ENCODE measurements at regions of chr2 and their contacts with region 1.

Region 1: DNA sequence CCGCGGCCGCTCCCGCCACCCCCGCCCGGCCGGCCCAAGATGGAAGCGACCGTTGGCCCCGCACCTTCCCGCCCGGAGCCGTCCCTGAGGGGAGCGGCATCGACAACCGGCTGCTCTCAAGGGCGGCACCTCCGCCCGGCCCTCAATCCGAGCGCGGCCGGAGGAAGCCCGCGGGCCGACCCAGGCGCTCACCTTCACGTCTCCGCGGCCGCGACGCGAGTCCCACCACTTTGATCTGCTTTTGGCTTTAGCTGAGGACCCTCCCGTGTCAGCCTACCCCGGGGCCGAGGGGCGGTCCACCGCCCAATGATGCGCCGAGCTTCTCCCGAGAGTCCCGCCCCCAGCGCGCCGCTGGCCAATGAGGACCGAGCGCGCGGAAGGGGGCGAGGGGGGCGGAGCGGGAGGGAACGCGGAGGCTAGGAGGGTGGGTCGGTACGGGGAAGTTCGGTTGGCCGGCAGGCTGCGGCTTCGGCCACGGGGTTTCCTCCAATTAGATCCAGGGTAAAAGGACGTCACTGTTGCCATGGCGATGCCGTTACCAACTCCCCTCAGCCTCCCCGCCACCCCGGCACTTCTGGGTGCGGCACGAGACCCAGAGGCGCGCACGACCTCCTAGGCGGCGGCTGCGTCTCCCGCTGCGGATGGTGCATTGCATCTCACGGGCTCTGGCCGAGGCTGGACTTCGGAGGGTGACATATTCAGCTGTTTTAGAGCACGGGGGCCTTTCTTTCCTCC is at the start of gene YWHAQ:
- DNase-seq: peak; percentile 93 to 99 (median 96)
- ATAC-seq: peak; percentile 85
- H3K4me3 ChIP-seq: peak within 1 kb of the TSS; percentile 93
- H3K4me3 Mint-ChIP-seq: peak within 1 kb of the TSS; percentile 98
- H3K27ac ChIP-seq: peak within 1 kb of the TSS; percentile 77 to 81
- H3K27ac Mint-ChIP-seq: peak within 1 kb of the TSS; percentile 96
- H3K4me1 ChIP-seq: peaks cover 42% of the 10 kb centered on the region
- H3K4me1 Mint-ChIP-seq: peaks cover 56% of the 10 kb centered on the region
- H3K27me3 ChIP-seq: no peaks in the 10 kb centered on the region
- H3K27me3 Mint-ChIP-seq: no peaks in the 10 kb centered on the region
- CTCF ChIP-seq: no peak
- total RNA-seq, gene YWHAQ: 95.8 to 101 TPM

Region 2: DNA sequence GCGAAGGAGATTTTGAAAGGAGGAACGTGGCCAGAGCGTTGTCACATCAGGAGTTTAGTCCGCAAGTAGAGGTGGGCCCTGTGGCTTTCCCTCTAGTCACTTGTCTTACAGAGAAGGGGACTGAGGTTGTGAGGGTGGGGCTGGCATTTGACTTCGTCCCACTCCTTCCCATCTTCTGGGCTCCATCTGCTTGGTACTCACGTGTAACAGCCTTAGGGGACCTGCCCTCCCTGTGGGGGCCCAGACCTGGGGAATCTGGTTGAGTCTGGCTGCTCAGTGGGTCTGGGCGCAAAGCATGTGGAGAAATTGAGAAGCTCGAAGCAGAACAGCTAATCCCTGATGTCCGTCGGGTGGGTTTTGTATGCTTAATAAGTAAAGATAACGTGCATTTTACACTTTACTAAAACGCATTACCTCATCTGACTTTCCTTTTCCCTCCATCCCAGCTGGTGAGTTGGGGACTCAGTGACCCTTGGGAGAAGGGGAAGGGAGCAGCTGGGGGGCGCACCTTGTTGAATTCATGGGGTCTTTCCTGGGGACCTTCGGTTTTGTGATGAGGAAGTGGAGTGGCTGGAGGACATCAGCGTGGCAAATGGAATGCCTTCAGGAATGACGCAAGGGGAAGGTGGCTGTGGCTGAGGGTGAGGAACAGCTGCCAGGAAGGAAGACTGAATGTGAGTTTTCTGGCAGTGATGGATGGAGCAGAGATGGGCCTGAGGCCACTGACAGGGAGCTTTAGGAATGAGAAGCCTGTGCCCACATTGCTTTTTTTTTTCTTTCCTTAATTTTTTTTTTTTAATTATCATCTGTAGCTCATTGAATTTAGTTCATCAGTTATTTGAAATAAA is 379.5 kb before region 1 on chr2:
- CTCF ChIA-PET with region 1: no interaction called
- POLR2A ChIA-PET with region 1: no interaction called
- intact Hi-C with region 1: no loop called
- DNase-seq: no peak
- ATAC-seq: no peak
- H3K4me3 ChIP-seq: no peak overlapping the region
- H3K4me3 Mint-ChIP-seq: no peak overlapping the region
- H3K27ac ChIP-seq: no peak overlapping the region
- H3K27ac Mint-ChIP-seq: no peak overlapping the region
- H3K4me1 ChIP-seq: no peaks in the 10 kb centered on the region
- H3K4me1 Mint-ChIP-seq: no peaks in the 10 kb centered on the region
- H3K27me3 ChIP-seq: peaks cover 2 to 3% of the 10 kb centered on the region in 2 experiments
- H3K27me3 Mint-ChIP-seq: peaks cover 6% of the 10 kb centered on the region
- CTCF ChIP-seq: no peak

Region 3: GRCh38 chr2:9423100-9423921 is 207.6 kb before region 1 on chr2 and contains the starts of genes CPSF3 and ITGB1BP1:
- CTCF ChIA-PET with region 1: no interaction called
- POLR2A ChIA-PET with region 1: interaction called, 11 read pairs
- intact Hi-C with region 1: loop called in 1 of 2 experiments (anchors 1 kb)
- DNase-seq: peak; percentile 87 to 98 (median 94)
- ATAC-seq: peak; percentile 84
- H3K4me3 ChIP-seq: peak within 1 kb of the TSS; percentile 99
- H3K4me3 Mint-ChIP-seq: peak within 1 kb of the TSS; percentile 94
- H3K27ac ChIP-seq: peak within 1 kb of the TSS; percentile 73 to 84
- H3K27ac Mint-ChIP-seq: no peak within 1 kb of the TSS
- H3K4me1 ChIP-seq: peaks cover 39% of the 10 kb centered on the region
- H3K4me1 Mint-ChIP-seq: peaks cover 35% of the 10 kb centered on the region
- H3K27me3 ChIP-seq: no peaks in the 10 kb centered on the region
- H3K27me3 Mint-ChIP-seq: no peaks in the 10 kb centered on the region
- CTCF ChIP-seq: no peak
- total RNA-seq, gene CPSF3: 13.2 to 13.8 TPM
- total RNA-seq, gene ITGB1BP1: 24.4 to 25.0 TPM

Region 4: DNA sequence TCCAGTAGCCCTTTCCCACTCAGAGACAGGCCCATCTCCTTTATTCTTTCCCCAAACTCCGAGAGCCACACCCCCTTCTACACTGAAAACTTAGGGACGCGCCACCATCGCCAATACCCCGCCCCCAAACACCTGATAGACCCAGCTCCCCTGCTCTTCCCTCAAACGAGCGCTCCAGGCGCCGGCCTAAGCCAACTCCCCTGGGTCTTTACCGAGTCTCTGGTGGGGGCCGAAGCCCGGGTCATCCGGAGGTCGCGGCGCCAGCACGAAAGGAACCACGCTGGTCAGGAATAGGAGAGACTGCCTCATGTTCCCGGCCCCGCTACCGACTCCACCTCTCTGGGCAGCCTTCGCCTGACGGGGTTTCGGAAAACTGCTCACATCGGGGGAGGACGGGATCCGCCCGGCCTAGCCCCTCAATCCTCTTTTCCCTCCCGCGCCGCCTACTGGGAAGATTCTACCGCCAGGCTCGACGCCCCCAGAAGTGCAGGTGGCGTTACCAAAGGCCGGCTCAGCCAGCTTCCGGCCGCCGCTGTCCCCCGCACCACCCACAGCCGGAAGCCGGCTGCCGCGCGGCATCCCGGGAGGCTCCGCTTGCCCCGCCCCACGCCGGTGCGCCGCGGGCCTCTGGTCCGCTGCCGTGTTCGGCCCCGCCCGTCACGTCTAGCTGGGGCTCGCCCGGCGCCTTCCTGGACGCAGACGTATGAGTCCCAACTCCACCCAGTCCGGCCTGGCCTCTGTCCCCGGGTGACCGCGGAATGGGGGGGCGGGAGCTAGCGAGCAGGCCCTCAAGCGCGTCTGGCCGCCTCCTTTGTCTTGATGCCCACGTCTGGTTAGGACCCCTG is 75.4 kb before region 1 on chr2 and contains the start of gene ADAM17:
- CTCF ChIA-PET with region 1: interaction called, 13 read pairs
- POLR2A ChIA-PET with region 1: interaction called, 80 read pairs
- intact Hi-C with region 1: loop called (anchors 1 kb)
- DNase-seq: peak; percentile 60 to 93 (median 80)
- ATAC-seq: peak; percentile 86
- H3K4me3 ChIP-seq: peak within 1 kb of the TSS; percentile 95
- H3K4me3 Mint-ChIP-seq: peak within 1 kb of the TSS; percentile 95
- H3K27ac ChIP-seq: peak within 1 kb of the TSS; percentile 93 to 97
- H3K27ac Mint-ChIP-seq: peak within 1 kb of the TSS; percentile 86
- H3K4me1 ChIP-seq: peaks cover 29% of the 10 kb centered on the region
- H3K4me1 Mint-ChIP-seq: peaks cover 58% of the 10 kb centered on the region
- H3K27me3 ChIP-seq: no peaks in the 10 kb centered on the region
- H3K27me3 Mint-ChIP-seq: no peaks in the 10 kb centered on the region
- CTCF ChIP-seq: peak; percentile 15
- total RNA-seq, gene ADAM17: 21.4 to 21.6 TPM

Region 5: GRCh38 chr2:9618410-9618809 is 12.5 kb before region 1 on chr2:
- CTCF ChIA-PET with region 1: no interaction called
- POLR2A ChIA-PET with region 1: interaction called, 34 read pairs
- intact Hi-C with region 1: no loop called
- DNase-seq: peak in 5 of 14 experiments; percentile 9 to 80 (median 45)
- ATAC-seq: peak; percentile 87
- H3K4me3 ChIP-seq: peak overlapping the region; percentile 9
- H3K4me3 Mint-ChIP-seq: peak overlapping the region; percentile 82
- H3K27ac ChIP-seq: no peak overlapping the region
- H3K27ac Mint-ChIP-seq: peak overlapping the region; percentile 79
- H3K4me1 ChIP-seq: peaks cover 11% of the 10 kb centered on the region
- H3K4me1 Mint-ChIP-seq: peaks cover 99% of the 10 kb centered on the region
- H3K27me3 ChIP-seq: no peaks in the 10 kb centered on the region
- H3K27me3 Mint-ChIP-seq: no peaks in the 10 kb centered on the region
- CTCF ChIP-seq: no peak

Region 6: DNA sequence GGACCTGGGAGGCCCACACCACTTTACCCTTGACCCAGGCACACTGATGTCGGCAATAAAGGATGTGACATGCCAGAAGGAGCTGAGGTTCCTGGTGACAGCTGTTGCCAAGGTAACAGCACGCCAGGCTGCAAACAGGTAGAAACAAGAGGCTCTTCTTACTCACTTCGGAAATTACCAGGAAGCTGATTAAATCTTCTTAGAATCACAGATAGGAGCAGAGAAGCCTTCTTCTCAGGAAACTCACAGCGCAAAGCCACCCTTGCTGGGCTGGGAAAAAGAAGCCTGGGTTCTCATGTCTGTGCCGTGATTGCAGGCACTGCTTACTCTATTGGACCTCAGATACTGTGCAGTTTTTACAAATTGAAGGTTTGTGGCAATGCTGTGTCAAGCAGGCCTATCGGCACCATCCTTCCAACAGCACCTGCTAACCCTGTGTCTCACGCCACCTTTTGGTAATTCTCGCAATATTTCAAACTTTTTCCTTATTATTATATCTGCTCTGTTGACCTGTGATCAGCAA is 151.3 kb after region 1 on chr2:
- CTCF ChIA-PET with region 1: no interaction called
- POLR2A ChIA-PET with region 1: interaction called, 8 read pairs
- intact Hi-C with region 1: loop called in 1 of 2 experiments (anchors 5 kb)
- DNase-seq: peak; percentile 40 to 94 (median 64)
- ATAC-seq: peak; percentile 78
- H3K4me3 ChIP-seq: peak overlapping the region; percentile 22
- H3K4me3 Mint-ChIP-seq: peak overlapping the region; percentile 61
- H3K27ac ChIP-seq: peak overlapping the region; percentile 62 to 95
- H3K27ac Mint-ChIP-seq: peak overlapping the region; percentile 87
- H3K4me1 ChIP-seq: peaks cover 75% of the 10 kb centered on the region
- H3K4me1 Mint-ChIP-seq: peaks cover 57% of the 10 kb centered on the region
- H3K27me3 ChIP-seq: no peaks in the 10 kb centered on the region
- H3K27me3 Mint-ChIP-seq: no peaks in the 10 kb centered on the region
- CTCF ChIP-seq: no peak

Region 7: DNA sequence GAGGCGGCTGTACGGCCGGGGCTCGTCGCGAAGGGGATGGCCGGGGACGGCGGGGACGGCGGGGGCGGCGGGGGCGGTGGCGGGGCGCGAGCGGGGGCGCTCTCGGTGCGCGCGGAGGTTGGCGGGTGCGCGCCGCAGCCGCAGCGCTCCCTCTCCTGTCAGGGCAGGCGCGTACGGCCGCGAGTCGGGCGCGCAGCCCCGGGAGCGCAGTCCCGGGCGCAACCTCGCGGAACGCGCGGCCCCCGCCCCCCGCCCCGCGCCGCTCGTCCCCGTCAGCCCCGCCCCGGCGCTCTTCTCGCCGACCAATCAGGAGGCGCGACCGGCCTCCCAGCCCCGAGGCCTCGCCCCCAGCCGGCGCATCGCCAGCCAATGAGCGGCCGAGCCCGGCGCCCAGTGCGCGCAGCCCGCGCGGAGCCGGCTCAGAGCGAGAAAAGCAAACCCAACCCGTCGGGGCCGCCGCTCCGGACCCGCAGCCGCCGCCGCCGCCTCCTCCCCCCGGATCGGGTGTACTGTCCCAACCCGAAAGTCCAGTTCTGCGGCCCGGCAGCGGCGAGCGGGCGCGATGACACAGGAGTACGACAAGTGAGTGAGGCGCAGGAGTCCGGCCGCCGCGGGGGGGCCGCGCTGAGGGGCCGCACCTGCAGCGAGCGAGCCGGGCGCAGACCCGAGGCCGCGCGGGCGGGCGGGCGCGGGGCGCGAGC is 320.5 kb after region 1 on chr2 and contains the start of gene GRHL1:
- CTCF ChIA-PET with region 1: no interaction called
- POLR2A ChIA-PET with region 1: no interaction called
- intact Hi-C with region 1: loop called in 1 of 2 experiments (anchors 5 kb)
- DNase-seq: peak; percentile 78 to 98 (median 88)
- ATAC-seq: peak; percentile 95
- H3K4me3 ChIP-seq: peak within 1 kb of the TSS; percentile 52
- H3K4me3 Mint-ChIP-seq: peak within 1 kb of the TSS; percentile 94
- H3K27ac ChIP-seq: no peak within 1 kb of the TSS
- H3K27ac Mint-ChIP-seq: peak within 1 kb of the TSS; percentile 39
- H3K4me1 ChIP-seq: peaks cover 10% of the 10 kb centered on the region
- H3K4me1 Mint-ChIP-seq: peaks cover 4% of the 10 kb centered on the region
- H3K27me3 ChIP-seq: peaks cover 11 to 21% of the 10 kb centered on the region in 2 experiments
- H3K27me3 Mint-ChIP-seq: peaks cover 56% of the 10 kb centered on the region
- CTCF ChIP-seq: no peak
- total RNA-seq, gene GRHL1: 0.28 to 0.38 TPM

Region 8: GRCh38 chr2:9967053-9967775 is 336.3 kb after region 1 on chr2:
- CTCF ChIA-PET with region 1: no interaction called
- POLR2A ChIA-PET with region 1: no interaction called
- intact Hi-C with region 1: no loop called
- DNase-seq: no peak
- ATAC-seq: no peak
- H3K4me3 ChIP-seq: no peak overlapping the region
- H3K4me3 Mint-ChIP-seq: no peak overlapping the region
- H3K27ac ChIP-seq: no peak overlapping the region
- H3K27ac Mint-ChIP-seq: no peak overlapping the region
- H3K4me1 ChIP-seq: peaks cover 3% of the 10 kb centered on the region
- H3K4me1 Mint-ChIP-seq: peaks cover 11% of the 10 kb centered on the region
- H3K27me3 ChIP-seq: no peaks in the 10 kb centered on the region
- H3K27me3 Mint-ChIP-seq: no peaks in the 10 kb centered on the region
- CTCF ChIP-seq: no peak

Measured in CD4-positive, alpha-beta T cell (primary cell).